Calu3 (cell line): ENCODE measurements at regions of chr14 and their contacts with region 1.

Region 1: GRCh38 chr14:22556990-22557623 is 31.9 kb downstream of the DAD1 start:
- DNase-seq: peak; percentile 89
- H3K4me3 Mint-ChIP-seq: peak overlapping the region; percentile 24
- H3K27ac Mint-ChIP-seq: peak overlapping the region; percentile 96
- H3K4me1 Mint-ChIP-seq: peaks cover 63% of the 10 kb centered on the region
- H3K27me3 Mint-ChIP-seq: no peaks in the 10 kb centered on the region
- CTCF ChIP-seq: peak; percentile 94

Region 2: GRCh38 chr14:22386924-22387775 is 170.0 kb before region 1 on chr14:
- CTCF ChIA-PET with region 1: interaction called, 9 read pairs
- intact Hi-C with region 1: loop called (anchors 2 kb)
- DNase-seq: peak; percentile 74
- H3K4me3 Mint-ChIP-seq: no peak overlapping the region
- H3K27ac Mint-ChIP-seq: no peak overlapping the region
- H3K4me1 Mint-ChIP-seq: peaks cover 55% of the 10 kb centered on the region
- H3K27me3 Mint-ChIP-seq: no peaks in the 10 kb centered on the region
- CTCF ChIP-seq: peak; percentile 60

Region 3: DNA sequence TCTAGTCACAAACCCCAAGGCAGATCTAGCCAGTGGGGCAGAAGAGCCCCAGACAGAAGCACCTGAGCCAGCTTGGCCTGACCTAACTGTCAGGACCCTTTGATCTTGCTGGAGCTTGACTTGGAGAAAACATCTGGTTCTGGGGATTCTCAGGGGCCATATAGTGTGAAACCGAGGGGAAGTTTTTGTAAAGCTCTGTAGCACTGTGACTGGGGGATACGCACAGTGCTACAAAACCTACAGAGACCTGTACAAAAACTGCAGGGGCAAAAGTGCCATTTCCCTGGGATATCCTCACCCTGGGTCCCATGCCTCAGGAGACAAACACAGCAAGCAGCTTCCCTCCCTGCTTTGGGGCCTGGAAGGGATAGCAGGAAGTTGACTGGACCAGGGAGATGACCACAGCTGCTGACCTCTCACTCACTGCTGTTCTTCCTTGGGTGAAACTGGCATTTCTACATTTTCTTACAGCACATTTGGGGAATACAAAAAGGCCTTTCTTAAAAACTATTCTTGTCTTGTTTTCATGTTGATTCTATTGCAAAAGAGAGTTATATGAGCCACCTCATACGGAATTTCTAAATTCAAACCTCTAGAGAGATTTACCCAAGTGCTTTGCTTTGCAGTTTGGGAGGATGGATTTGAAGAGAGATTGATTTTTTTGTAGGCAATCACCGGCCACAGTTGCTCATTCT is 108.1 kb before region 1 on chr14:
- CTCF ChIA-PET with region 1: no interaction called
- intact Hi-C with region 1: no loop called
- DNase-seq: peak; percentile 19
- H3K4me3 Mint-ChIP-seq: no peak overlapping the region
- H3K27ac Mint-ChIP-seq: no peak overlapping the region
- H3K4me1 Mint-ChIP-seq: peaks cover 13% of the 10 kb centered on the region
- H3K27me3 Mint-ChIP-seq: peaks cover 18% of the 10 kb centered on the region
- CTCF ChIP-seq: no peak

Region 4: GRCh38 chr14:22589096-22589839 is 32.2 kb after region 1 on chr14 and contains the start of gene DAD1:
- CTCF ChIA-PET with region 1: interaction called, 13 read pairs
- intact Hi-C with region 1: no loop called
- DNase-seq: peak; percentile 97
- H3K4me3 Mint-ChIP-seq: peak within 1 kb of the TSS; percentile 87
- H3K27ac Mint-ChIP-seq: peak within 1 kb of the TSS; percentile 93
- H3K4me1 Mint-ChIP-seq: peaks cover 23% of the 10 kb centered on the region
- H3K27me3 Mint-ChIP-seq: peaks cover 16% of the 10 kb centered on the region
- CTCF ChIP-seq: peak; percentile 31
- total RNA-seq, gene DAD1: 196 and 197 TPM in 2 replicates

Region 5: GRCh38 chr14:22653012-22653621 is 96.0 kb after region 1 on chr14:
- CTCF ChIA-PET with region 1: interaction called, 14 read pairs
- intact Hi-C with region 1: loop called (anchors 5 kb)
- DNase-seq: peak; percentile 80
- H3K4me3 Mint-ChIP-seq: no peak overlapping the region
- H3K27ac Mint-ChIP-seq: no peak overlapping the region
- H3K4me1 Mint-ChIP-seq: peaks cover 27% of the 10 kb centered on the region
- H3K27me3 Mint-ChIP-seq: no peaks in the 10 kb centered on the region
- CTCF ChIP-seq: peak; percentile 67

Region 6: DNA sequence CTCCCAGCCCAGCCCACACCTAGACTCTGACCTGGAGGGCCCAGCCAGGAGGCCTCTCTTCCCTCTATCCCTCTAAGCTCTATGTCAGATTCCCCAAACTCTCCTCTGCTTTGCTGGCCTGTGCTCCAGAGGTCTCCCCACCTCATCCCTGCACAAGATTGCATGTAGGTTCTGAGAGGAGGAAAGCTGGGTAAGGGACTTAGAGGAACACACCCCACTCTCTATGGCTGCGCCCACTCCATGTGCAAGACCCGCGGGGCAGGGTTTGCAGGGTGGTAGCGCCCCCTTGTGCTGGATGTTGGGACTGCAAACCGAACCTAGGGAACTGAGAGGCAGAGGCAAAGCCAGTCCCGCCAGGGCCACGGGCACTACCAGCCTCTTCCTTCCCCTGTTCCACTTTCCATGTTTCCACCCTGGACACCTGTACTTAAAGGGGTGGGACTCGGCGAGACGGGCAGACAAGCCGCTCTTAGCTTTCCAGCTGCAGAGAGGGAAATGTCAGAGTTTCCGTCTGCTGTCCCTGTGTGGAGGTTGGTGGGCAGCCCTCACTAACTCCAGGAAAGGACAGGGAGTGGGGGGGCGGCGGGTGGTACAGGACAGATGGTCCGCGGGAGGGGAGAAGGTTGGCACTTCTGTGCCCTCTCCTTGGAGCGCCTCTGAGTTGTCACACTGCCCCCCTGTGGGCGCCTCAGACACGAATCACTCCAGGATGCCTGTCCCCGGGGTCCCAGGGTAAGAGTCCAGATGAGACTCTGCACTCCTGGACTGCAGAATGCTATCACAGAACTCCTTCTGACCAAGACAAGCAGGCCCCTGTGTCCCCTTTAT is 296.0 kb after region 1 on chr14:
- CTCF ChIA-PET with region 1: interaction called, 3 read pairs
- intact Hi-C with region 1: loop called (anchors 2 kb)
- DNase-seq: peak; percentile 91
- H3K4me3 Mint-ChIP-seq: peak overlapping the region; percentile 52
- H3K27ac Mint-ChIP-seq: peak overlapping the region; percentile 51
- H3K4me1 Mint-ChIP-seq: no peaks in the 10 kb centered on the region
- H3K27me3 Mint-ChIP-seq: no peaks in the 10 kb centered on the region
- CTCF ChIP-seq: peak; percentile 77